Mucosa of descending colon (tissue), 3 donors: ENCODE measurements at regions of chr22 and their contacts with region 1.

Region 1: DNA sequence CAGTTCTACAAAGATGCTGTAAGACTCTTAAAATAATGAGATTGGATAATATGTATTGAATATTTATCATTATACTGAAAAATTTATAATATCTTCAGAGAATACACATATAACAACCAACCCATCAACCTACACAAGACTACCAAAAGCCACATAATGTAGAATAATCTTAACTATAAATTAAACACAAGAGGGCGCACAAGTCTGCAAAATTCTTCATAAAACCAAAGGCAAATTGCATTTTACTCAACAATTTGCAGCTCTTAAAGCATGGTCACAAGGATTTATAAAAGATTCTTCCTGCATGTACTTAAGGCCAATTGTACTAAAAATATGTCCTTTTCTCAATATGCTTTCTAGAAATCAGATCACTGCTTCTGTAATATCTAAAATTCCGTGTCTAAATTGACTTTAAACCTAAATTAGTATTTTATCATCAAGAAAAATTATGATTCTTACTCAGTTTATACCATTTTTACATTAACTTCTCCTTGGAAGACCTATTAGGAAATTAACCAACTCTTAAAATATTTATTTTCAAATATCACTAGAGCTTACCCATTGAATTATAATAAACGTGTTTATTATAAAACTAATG is 79.0 kb downstream of the TTC28 start:
- DNase-seq: peak in 1 of 3 donors; percentile 33
- ATAC-seq: peak; percentile 55
- H3K4me3 ChIP-seq: no peak overlapping the region
- H3K4me1 ChIP-seq: no peaks in the 10 kb centered on the region
- CTCF ChIP-seq: no peak

Region 2: GRCh38 chr22:28541137-28541536 is 59.5 kb before region 1 on chr22:
- intact Hi-C with region 1: no loop called
- DNase-seq: no peak
- ATAC-seq: no peak
- H3K4me3 ChIP-seq: no peak overlapping the region
- H3K4me1 ChIP-seq: no peaks in the 10 kb centered on the region
- CTCF ChIP-seq: no peak

Region 3: DNA sequence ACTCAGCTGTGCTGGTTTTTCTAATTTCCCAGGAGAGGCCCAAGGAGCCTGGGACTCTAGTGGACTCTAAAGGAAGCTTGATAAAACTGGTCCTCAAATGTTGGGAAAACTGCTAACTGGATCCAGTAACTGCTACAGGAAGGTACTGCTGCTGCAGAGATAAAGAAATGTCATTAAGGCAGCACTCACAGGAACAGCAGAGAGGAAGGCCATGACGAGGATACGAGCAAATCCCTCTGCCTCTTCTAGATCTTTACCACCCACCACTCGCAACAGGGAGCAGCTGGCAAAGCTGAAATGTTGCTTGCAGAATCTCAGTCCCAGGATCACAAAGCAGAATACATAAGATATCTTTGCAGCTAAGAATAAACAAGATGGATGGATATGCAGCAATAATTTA is 55.5 kb after region 1 on chr22:
- intact Hi-C with region 1: no loop called
- DNase-seq: no peak
- ATAC-seq: no peak
- H3K4me3 ChIP-seq: no peak overlapping the region
- H3K4me1 ChIP-seq: no peaks in the 10 kb centered on the region
- CTCF ChIP-seq: no peak

Region 4: DNA sequence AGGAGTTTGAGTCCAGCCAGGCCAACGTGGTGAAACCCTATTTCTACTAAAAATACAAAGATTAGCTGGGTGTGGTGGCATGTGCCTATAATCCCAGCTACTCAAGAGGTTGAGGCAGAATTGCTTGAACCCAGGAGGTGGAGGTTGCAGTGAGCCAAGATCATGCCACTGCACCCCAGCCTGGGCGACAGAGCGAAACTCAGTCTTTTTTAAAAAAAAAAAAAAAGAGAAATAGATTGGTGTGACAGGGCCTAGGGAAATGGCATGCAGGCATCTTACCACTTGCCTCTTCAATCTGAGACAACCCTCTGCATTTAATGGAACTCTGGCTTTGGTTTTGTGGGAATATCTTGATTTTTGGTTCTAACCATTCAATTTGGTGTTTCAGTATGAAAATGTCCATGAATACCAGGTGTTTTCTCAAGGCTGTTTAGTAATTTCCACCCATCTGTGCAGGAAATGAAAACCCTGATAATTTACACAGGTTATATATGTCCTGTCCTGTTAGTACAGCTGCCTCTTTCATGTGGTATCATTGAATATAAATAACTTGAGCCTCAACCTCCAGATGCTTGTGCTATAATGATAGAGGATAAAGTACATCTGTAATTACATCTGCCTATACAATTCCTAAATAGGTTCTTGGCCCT is 191.3 kb after region 1 on chr22:
- intact Hi-C with region 1: no loop called
- DNase-seq: no peak
- ATAC-seq: peak; percentile 62
- H3K4me3 ChIP-seq: no peak overlapping the region
- H3K4me1 ChIP-seq: peaks cover 13% of the 10 kb centered on the region
- CTCF ChIP-seq: no peak

Region 5: GRCh38 chr22:28829358-28830181 is 228.9 kb after region 1 on chr22:
- intact Hi-C with region 1: loop called (anchors 5 to 10 kb)
- DNase-seq: peak; percentile 73 to 88 (median 81)
- ATAC-seq: peak; percentile 97
- H3K4me3 ChIP-seq: no peak overlapping the region
- H3K4me1 ChIP-seq: no peaks in the 10 kb centered on the region
- CTCF ChIP-seq: peak; percentile 85